ENCODE measurements at regions of chr17 and their contacts with region 1.

Region 1: DNA sequence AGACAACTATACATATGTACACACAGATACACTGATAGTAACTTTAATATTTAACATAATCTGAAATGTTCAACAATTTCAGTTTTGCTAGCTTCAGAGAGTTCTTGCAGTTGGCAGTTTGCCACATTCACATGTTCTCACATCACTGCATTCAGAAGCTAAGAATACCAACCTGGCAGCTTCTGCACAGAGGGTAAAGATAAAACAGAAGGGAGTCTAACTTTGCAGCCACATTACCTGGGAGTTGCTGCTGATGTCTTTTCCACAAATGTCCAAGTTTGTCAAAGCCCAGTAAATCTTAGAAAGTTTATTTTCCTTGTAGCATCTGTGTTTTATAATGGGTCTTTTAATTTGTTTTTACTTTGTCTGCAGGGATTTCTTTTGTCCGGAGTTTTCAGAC is 332.0 kb downstream of the BCAS3 start:
- DNase-seq: peak in 2 of 5 donors; percentile 31 to 33
- ATAC-seq: peak in 3 of 4 donors; percentile 53 to 72 (median 64)
- H3K4me3 ChIP-seq: no peak overlapping the region
- H3K27ac ChIP-seq: peak overlapping the region in 4 of 12 donors; percentile 19 to 60 (median 40)
- H3K4me1 ChIP-seq: peaks cover 0 to 48% (median 22%) of the 10 kb centered on the region in 12 donors
- H3K27me3 ChIP-seq: no peaks in the 10 kb centered on the region
- CTCF ChIP-seq: no peak
- POLR2A ChIP-seq: no peak

Region 2: GRCh38 chr17:60969500-60970037 is 40.1 kb before region 1 on chr17:
- intact Hi-C with region 1: no loop called
- DNase-seq: no peak
- ATAC-seq: no peak
- H3K4me3 ChIP-seq: no peak overlapping the region
- H3K27ac ChIP-seq: no peak overlapping the region
- H3K4me1 ChIP-seq: peaks cover 0 to 3% (median 0%) of the 10 kb centered on the region in 12 donors
- H3K27me3 ChIP-seq: no peaks in the 10 kb centered on the region
- CTCF ChIP-seq: no peak
- POLR2A ChIP-seq: no peak

Region 3: GRCh38 chr17:61054436-61054835 is 44.8 kb after region 1 on chr17:
- intact Hi-C with region 1: loop called in 1 of 10 experiments (anchors 5 kb)
- DNase-seq: peak in 2 of 5 donors; percentile 20 to 33
- ATAC-seq: peak in 2 of 4 donors; percentile 62 to 64
- H3K4me3 ChIP-seq: no peak overlapping the region
- H3K27ac ChIP-seq: no peak overlapping the region
- H3K4me1 ChIP-seq: peaks cover 0 to 11% (median 0%) of the 10 kb centered on the region in 12 donors
- H3K27me3 ChIP-seq: no peaks in the 10 kb centered on the region
- CTCF ChIP-seq: no peak
- POLR2A ChIP-seq: no peak

Region 4: GRCh38 chr17:61128661-61129115 is 119.0 kb after region 1 on chr17:
- intact Hi-C with region 1: loop called in 2 of 10 experiments (anchors 5 kb)
- DNase-seq: peak in 3 of 5 donors; percentile 15 to 25 (median 23)
- ATAC-seq: peak in 3 of 4 donors; percentile 49 to 72 (median 69)
- H3K4me3 ChIP-seq: no peak overlapping the region
- H3K27ac ChIP-seq: peak overlapping the region in 10 of 12 donors; percentile 40 to 69 (median 57)
- H3K4me1 ChIP-seq: peaks cover 0 to 33% (median 10%) of the 10 kb centered on the region in 12 donors
- H3K27me3 ChIP-seq: no peaks in the 10 kb centered on the region
- CTCF ChIP-seq: no peak
- POLR2A ChIP-seq: no peak

Region 5: DNA sequence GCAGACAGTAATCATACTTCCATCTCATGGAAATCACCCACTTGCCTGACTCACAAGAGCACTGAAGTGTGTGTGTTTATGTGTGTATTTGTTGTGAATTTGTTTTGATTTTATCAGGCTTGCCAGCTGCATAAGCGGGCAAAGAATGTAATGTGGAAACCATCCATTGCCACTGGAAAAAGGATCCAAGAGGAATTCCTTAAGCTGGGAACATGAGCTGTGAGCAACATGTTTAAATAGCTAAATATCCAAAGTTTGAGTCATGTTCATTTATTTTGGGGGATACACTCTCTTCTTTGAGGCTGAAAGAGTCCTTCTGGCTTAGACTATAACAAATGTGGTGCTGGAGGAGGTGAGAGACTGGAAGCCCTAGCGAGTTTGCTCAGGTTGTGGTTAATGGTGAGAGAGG is 191.6 kb after region 1 on chr17:
- intact Hi-C with region 1: loop called in 3 of 10 experiments (anchors 5 to 10 kb)
- DNase-seq: no peak
- ATAC-seq: no peak
- H3K4me3 ChIP-seq: no peak overlapping the region
- H3K27ac ChIP-seq: peak overlapping the region in 3 of 12 donors; percentile 36 to 57 (median 56)
- H3K4me1 ChIP-seq: peaks cover 0 to 28% (median 0%) of the 10 kb centered on the region in 12 donors
- H3K27me3 ChIP-seq: no peaks in the 10 kb centered on the region
- CTCF ChIP-seq: no peak
- POLR2A ChIP-seq: no peak

Region 6: GRCh38 chr17:61399131-61400057 is 389.7 kb after region 1 on chr17 and contains the start of gene TBX2:
- intact Hi-C with region 1: loop called in 7 of 10 experiments (anchors 5 kb)
- DNase-seq: peak; percentile 84 to 90 (median 87)
- ATAC-seq: peak; percentile 47 to 75 (median 60)
- H3K4me3 ChIP-seq: peak within 1 kb of the TSS; percentile 51 to 84 (median 65)
- H3K27ac ChIP-seq: peak within 1 kb of the TSS; percentile 47 to 88 (median 78)
- H3K4me1 ChIP-seq: peaks cover 0 to 71% (median 34%) of the 10 kb centered on the region in 12 donors
- H3K27me3 ChIP-seq: peaks cover 37 to 90% (median 80%) of the 10 kb centered on the region in 9 donors
- CTCF ChIP-seq: peak in 1 of 12 donors; percentile 17
- POLR2A ChIP-seq: peak in 1 of 2 donors; percentile 50
- total RNA-seq, gene TBX2: 7.0 to 23.0 (median 13.6) TPM